ENCODE measurements at regions of chr1 and their contacts with region 1.

Region 1: GRCh38 chr1:117051224-117052064 is 8.7 kb upstream of the TTF2 start:
- DNase-seq: no peak
- ATAC-seq: peak; percentile 66
- H3K4me3 Mint-ChIP-seq: peak overlapping the region; percentile 71
- H3K27ac Mint-ChIP-seq: peak overlapping the region; percentile 79
- H3K4me1 Mint-ChIP-seq: peaks cover 43% of the 10 kb centered on the region
- H3K27me3 Mint-ChIP-seq: no peaks in the 10 kb centered on the region
- CTCF ChIP-seq: no peak

Region 2: DNA sequence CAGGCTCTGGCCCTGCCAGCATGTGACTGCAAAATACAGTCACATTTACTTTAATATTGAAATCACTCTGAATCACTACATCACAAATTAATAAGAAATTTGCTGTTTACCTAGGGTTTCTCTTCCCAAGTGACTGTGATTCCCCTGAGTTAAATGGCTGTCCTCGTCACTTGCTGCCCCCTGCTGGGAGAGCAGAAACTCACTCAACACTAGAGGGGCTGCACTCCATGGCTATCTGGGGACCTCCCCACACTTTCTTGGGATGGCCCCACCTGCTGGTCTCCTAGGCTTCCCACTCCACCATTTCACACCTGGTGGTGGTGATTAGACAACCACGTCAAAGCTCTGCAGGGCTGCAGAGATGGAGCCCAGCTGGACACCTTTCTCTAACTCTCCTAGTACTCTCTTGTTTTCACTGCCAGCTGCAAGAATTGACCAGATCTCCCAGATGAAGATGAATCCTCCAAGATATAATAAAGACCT is 233.8 kb before region 1 on chr1:
- CTCF ChIA-PET with region 1: no interaction called
- POLR2A ChIA-PET with region 1: no interaction called
- intact Hi-C with region 1: loop called (anchors 2 kb)
- DNase-seq: peak; percentile 33
- ATAC-seq: peak; percentile 66
- H3K4me3 Mint-ChIP-seq: no peak overlapping the region
- H3K27ac Mint-ChIP-seq: no peak overlapping the region
- H3K4me1 Mint-ChIP-seq: peaks cover 9% of the 10 kb centered on the region
- H3K27me3 Mint-ChIP-seq: no peaks in the 10 kb centered on the region
- CTCF ChIP-seq: no peak

Region 3: GRCh38 chr1:116997066-116997465 is 54.4 kb before region 1 on chr1:
- CTCF ChIA-PET with region 1: no interaction called
- POLR2A ChIA-PET with region 1: no interaction called
- intact Hi-C with region 1: no loop called
- DNase-seq: no peak
- ATAC-seq: no peak
- H3K4me3 Mint-ChIP-seq: no peak overlapping the region
- H3K27ac Mint-ChIP-seq: no peak overlapping the region
- H3K4me1 Mint-ChIP-seq: peaks cover 15% of the 10 kb centered on the region
- H3K27me3 Mint-ChIP-seq: peaks cover 3% of the 10 kb centered on the region
- CTCF ChIP-seq: no peak

Region 4: DNA sequence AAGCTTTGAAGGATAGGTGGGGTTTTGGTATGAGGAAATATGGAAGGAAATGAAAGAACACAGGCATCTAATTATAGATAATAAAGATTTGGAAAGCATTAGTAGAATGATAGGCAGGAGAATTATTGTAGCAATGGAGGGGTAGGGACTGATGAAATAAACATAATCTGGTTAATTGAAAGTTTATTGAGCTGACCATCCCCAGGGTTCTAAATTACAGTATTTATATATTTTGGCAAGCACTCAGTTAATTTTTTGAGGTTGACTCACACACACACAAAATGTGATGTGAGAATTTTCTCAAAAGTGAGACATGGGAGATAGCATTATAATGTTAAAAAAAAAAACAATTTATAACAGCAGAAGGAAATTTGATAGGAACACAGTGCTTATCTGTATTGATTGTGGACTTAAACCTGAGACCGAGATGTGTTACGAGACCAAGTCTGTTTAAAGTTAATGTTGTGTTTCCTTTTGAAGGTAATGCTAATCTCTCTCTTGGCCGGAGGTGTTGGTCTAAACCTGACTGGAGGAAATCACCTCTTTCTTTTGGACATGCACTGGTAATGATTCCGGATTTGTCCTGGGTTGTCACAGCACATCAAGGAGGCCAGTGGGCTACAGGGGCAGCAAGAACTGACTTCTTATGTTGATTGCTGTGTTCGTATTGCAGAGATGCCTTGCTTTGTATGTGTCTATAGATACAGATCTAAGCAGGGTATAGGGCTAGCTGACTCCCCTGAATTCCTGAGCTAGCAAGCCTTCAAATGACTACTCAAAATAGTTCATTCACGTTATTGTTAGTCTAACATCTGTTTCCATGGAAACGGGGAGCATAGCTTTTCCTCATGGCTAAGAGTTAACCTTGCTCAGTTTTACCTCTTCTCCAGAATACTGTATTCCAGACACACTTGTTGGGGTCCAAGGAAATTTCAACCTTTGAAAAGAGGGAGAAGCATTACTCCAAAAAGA is 45.7 kb after region 1 on chr1:
- CTCF ChIA-PET with region 1: no interaction called
- POLR2A ChIA-PET with region 1: no interaction called
- intact Hi-C with region 1: no loop called
- DNase-seq: no peak
- ATAC-seq: no peak
- H3K4me3 Mint-ChIP-seq: no peak overlapping the region
- H3K27ac Mint-ChIP-seq: no peak overlapping the region
- H3K4me1 Mint-ChIP-seq: peaks cover 5% of the 10 kb centered on the region
- H3K27me3 Mint-ChIP-seq: no peaks in the 10 kb centered on the region
- CTCF ChIP-seq: no peak